RWPE1 (cell line): ENCODE measurements at regions of chr12 and their contacts with region 1.

Region 1: DNA sequence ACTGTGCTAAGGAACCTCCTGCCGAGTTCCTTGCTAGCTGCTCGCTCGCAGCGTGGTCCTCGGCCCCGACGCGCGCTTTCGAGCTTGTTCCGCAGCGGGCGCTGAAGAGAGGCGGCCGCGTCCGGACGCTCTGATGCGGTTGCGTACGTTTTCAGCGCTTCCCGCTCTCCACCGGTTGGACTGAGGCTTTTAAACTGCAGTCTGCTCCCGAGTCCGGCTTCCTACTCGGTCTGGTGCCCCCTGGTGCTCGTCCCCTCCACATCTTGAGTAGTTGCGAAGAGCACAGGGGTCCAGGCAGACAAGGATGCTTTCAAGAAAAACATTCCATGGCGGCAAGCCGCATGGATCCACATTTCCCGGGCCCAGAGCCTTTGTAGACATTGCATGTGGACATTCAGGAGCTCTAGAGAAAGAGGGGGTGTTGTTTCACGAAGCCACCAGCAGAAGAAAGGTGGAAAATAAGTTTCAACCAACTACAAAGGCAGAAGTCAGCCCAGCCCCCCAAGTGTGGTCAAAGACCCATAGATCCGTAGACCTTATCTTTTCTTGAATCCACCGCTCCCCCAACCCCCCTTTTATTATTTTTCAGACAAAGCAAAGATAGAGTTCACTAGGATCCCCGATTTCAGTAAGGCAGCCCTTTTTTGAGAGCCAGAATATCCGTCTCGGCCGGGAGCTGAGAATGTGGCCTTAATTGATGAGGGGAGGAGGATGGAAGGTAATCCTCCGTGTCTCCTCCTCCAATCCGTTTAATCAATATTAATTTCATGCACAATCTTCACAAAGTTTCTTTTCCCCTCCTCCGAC is 984 bp upstream of the WNK1 start:
- DNase-seq: peak; percentile 78
- H3K27ac ChIP-seq: peak overlapping the region; percentile 88
- CTCF ChIP-seq: peak; percentile 49

Region 2: DNA sequence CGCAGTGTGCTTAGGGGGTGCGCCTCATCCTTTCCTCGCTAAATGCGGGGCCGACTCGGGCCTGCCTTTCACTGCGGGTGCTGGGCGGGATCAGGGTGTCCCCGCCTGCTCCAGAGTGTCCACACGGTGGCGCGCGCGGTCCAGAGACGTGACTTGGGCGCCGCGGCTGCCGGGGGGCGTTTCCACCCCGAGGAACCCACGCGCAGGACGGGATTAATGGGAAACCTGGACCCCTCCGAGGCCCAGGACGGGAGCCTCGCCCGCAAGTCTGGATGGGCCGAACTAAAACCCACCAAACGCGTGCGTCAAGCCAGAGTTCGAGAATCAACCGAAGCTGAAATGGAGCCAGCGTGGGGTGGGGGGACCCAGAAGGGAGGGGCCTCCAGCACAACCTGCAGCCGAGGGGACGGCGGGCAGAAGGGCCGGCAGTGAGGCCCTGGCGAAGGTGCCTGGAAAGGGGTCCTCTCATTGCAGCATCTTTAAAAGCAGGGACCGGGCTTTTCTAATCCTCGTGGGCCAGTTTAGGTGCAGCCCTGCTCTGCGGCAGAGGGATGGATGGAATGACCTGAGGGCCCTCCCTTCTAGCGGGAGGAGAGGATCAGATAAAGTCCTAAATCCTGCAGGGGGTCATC is 181.5 kb before region 1 on chr12:
- CTCF ChIA-PET with region 1: interaction called, 22 read pairs
- POLR2A ChIA-PET with region 1: interaction called, 5 read pairs
- DNase-seq: peak; percentile 88
- H3K27ac ChIP-seq: peak overlapping the region; percentile 99
- CTCF ChIP-seq: peak; percentile 75

Region 3: DNA sequence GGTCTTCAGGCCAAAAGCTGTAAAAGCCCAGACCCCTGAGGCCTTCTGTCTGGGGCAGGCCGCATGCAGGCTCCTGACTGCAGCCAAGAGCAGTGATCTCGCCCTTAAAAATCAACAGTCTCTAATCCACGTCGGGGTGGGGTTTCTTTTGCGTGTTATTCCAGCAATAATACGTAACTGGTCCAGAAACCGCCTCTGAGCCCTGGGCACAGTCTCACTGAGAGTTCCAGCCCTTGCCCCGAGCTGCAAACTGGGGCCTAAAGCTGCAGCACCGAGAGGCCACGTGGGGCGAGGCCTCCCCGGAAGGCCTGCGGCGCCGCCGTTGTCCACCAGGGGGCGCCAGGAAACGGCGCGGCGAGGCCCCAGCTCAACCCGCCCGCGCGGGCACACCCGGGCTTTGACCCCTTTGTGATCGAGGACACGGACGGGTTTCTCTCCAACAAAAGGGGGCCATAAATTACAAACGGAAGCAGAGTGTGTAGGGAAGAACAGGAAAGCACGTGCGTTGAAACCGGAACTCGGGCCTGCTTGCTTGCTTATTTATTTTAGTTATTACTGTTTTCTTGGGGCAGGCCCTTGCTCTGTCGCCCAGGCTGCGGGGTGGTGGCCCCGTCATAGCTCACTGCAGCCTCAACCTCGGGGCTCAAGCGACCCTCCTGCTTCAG is 175.3 kb before region 1 on chr12:
- CTCF ChIA-PET with region 1: interaction called, 22 read pairs
- POLR2A ChIA-PET with region 1: no interaction called
- DNase-seq: peak; percentile 64
- H3K27ac ChIP-seq: peak overlapping the region; percentile 99
- CTCF ChIP-seq: peak; percentile 86

Region 4: DNA sequence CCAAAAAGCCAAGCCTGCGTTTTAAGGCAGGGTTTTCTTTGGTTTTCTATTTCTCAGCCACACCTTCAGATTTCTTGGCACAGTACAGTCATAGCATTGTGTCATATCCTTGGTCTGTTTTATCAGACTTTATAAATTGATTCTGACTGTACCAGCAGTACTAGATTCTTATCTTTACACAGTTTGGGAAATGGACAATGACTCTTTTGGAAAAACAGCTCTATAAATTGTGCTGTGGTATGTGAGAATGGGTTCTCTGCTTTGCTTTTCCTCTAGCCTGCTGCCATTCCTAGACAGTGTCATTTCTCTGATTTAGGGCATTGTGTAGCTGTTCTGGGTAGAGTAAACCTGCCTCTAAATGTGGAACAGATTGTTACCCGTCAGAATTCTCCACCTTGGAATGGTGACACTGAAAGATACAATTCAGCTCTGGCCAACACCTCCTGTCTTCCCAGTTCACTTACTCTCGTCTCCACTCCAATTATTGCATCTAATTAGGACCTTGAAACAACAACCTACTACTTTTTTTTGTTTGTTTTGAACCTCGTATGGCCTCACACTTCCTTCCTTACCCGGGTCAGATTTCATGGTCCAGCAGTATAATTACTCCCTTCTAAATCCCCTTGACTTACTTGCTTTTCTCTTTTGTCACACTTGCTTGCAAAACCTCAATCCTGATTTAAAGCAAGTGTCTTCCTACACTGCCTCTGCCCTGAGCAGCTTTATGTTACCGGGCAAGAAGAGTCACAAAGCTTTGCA is 466.0 kb after region 1 on chr12:
- CTCF ChIA-PET with region 1: no interaction called
- POLR2A ChIA-PET with region 1: no interaction called
- DNase-seq: peak; percentile 54
- H3K27ac ChIP-seq: no peak overlapping the region
- CTCF ChIP-seq: no peak